Endothelial cell of umbilical vein (primary cell): ENCODE measurements at regions of chr15 and their contacts with region 1.

Region 1: DNA sequence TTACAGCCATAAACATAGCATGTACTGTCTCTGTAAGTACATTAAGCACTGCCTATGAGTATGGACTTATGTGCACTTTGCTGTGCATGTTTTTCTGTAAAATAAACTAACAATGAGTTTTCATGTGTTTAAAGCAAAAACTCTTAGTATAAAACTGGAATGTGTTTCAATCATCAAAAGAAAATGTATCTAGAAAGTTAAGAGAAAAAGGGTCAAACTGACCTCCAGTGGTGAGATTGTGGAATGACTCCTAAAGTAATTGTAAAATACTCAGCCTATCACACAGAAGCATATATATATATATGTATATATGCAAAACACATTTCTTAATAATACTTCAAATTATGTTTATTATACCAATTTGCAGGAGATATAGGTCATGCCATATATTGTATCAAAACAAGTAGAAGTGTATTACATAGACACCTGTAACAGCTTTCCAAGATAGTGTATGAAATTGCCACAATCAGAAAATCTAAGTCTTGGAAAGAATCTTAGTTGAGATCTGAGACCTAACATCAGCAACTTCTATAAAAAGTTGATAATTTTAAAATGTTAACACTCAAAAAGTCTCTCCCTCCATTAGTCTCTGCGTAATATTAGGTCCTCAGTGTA is 199.6 kb downstream of the FMN1 start:
- DNase-seq: peak; percentile 63
- H3K4me3 ChIP-seq: no peak overlapping the region
- H3K27ac ChIP-seq: no peak overlapping the region
- H3K4me1 ChIP-seq: no peaks in the 10 kb centered on the region
- H3K27me3 ChIP-seq: no peaks in the 10 kb centered on the region
- CTCF ChIP-seq: peak; percentile 19 to 25
- POLR2A ChIP-seq: no peak

Region 2: DNA sequence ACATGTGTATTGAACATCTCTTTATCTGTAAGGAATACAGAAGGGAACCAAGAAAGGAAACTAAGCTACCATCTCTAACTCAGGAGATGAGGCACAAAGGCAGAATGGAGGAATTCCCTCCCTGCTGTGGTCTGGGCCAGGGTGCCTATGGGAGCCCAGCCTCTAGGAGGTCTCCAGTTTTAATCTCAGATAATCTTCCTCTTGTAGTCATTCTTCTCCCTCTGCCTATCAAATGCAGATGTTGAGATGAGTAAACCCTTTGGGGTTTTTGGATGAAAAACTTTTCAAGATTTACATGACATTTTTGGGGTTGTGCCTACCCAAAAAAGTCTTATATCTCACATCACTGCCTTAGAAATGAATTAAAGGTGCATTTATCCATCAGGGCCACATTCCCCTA is 330.1 kb before region 1 on chr15:
- CTCF ChIA-PET with region 1: interaction called, 226 read pairs
- POLR2A ChIA-PET with region 1: no interaction called
- dilution Hi-C with region 1: no loop called
- intact Hi-C with region 1: loop called (anchors 1 kb)
- DNase-seq: no peak
- H3K4me3 ChIP-seq: no peak overlapping the region
- H3K27ac ChIP-seq: no peak overlapping the region
- H3K4me1 ChIP-seq: no peaks in the 10 kb centered on the region
- H3K27me3 ChIP-seq: no peaks in the 10 kb centered on the region
- CTCF ChIP-seq: no peak
- POLR2A ChIP-seq: no peak

Region 3: GRCh38 chr15:32683906-32684584 is 310.9 kb before region 1 on chr15:
- CTCF ChIA-PET with region 1: interaction called, 3 read pairs
- POLR2A ChIA-PET with region 1: no interaction called
- dilution Hi-C with region 1: loop called (anchors 25 kb)
- intact Hi-C with region 1: no loop called
- DNase-seq: peak; percentile 9
- H3K4me3 ChIP-seq: no peak overlapping the region
- H3K27ac ChIP-seq: no peak overlapping the region
- H3K4me1 ChIP-seq: peaks cover 2% of the 10 kb centered on the region
- H3K27me3 ChIP-seq: no peaks in the 10 kb centered on the region
- CTCF ChIP-seq: no peak
- POLR2A ChIP-seq: no peak

Region 4: GRCh38 chr15:33007303-33007855 is 12.5 kb after region 1 on chr15:
- CTCF ChIA-PET with region 1: no interaction called
- POLR2A ChIA-PET with region 1: no interaction called
- dilution Hi-C with region 1: no loop called
- intact Hi-C with region 1: no loop called
- DNase-seq: peak; percentile 28
- H3K4me3 ChIP-seq: no peak overlapping the region
- H3K27ac ChIP-seq: no peak overlapping the region
- H3K4me1 ChIP-seq: no peaks in the 10 kb centered on the region
- H3K27me3 ChIP-seq: no peaks in the 10 kb centered on the region
- CTCF ChIP-seq: peak in 1 of 2 donors; percentile 14
- POLR2A ChIP-seq: no peak